Activated T-helper 2 cell treated with anti-CD3 and anti-CD28 coated beads, Interferon-gamma antibody, Interleukin-2, Interleukin-4, amounts not matched to agents 10 μg/mL and 5 μg/mL and 100 μg/mL, durations not matched to agents 14 hours and 24 hours and 36 hours (primary cell): ENCODE measurements at regions of chr16 and their contacts with region 1.

Region 1: GRCh38 chr16:3129137-3130131 is 5.4 kb upstream of the ZNF213 start:
- DNase-seq: peak; percentile 81
- H3K4me3 Mint-ChIP-seq: peak overlapping the region; percentile 87
- H3K27ac Mint-ChIP-seq: peak overlapping the region; percentile 80
- H3K4me1 Mint-ChIP-seq: peaks cover 46% of the 10 kb centered on the region
- H3K27me3 Mint-ChIP-seq: no peaks in the 10 kb centered on the region

Region 2: DNA sequence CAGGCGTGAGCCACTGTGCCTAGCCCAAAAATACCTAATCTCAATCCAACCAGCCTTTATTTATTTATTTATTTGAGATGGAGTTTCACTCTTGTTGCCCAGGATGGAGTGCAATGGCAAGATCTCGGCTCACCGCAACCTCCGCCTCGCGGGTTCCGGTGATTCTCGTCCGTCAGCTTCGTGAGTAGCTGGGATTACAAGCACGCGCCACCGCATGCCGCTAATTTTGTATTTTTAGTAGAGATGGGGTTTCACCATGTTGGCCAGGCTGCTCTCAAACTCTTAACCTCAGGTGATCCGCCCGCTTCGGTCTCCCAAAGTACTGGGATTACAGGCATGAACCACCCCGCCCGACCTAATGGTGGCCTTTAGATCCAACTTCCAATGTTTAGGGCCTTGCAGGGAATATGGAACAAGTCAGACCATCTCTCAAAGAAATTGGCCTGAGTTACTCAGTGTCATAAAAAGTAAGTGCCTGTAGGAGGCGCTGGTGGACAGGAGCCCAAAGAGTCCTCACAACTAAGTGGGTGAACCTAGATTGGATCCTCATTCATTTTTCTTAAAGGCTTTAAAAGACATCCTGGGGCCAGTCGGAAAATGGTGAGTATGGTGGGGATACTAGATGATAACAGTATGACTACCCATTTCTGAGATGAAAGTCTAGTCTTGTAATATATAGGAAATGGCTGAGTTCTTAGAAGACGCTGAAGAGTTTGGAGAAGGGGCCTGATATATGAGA is 35.0 kb before region 1 on chr16:
- intact Hi-C with region 1: loop called (anchors 1 kb)
- DNase-seq: peak; percentile 41
- H3K4me3 Mint-ChIP-seq: no peak overlapping the region
- H3K27ac Mint-ChIP-seq: peak overlapping the region; percentile 9
- H3K4me1 Mint-ChIP-seq: peaks cover 24% of the 10 kb centered on the region
- H3K27me3 Mint-ChIP-seq: peaks cover 4% of the 10 kb centered on the region

Region 3: GRCh38 chr16:3106205-3106928 is 23.1 kb before region 1 on chr16:
- intact Hi-C with region 1: loop called (anchors 1 kb)
- DNase-seq: peak; percentile 87
- H3K4me3 Mint-ChIP-seq: peak overlapping the region; percentile 84
- H3K27ac Mint-ChIP-seq: peak overlapping the region; percentile 93
- H3K4me1 Mint-ChIP-seq: peaks cover 17% of the 10 kb centered on the region
- H3K27me3 Mint-ChIP-seq: peaks cover 2% of the 10 kb centered on the region

Region 4: DNA sequence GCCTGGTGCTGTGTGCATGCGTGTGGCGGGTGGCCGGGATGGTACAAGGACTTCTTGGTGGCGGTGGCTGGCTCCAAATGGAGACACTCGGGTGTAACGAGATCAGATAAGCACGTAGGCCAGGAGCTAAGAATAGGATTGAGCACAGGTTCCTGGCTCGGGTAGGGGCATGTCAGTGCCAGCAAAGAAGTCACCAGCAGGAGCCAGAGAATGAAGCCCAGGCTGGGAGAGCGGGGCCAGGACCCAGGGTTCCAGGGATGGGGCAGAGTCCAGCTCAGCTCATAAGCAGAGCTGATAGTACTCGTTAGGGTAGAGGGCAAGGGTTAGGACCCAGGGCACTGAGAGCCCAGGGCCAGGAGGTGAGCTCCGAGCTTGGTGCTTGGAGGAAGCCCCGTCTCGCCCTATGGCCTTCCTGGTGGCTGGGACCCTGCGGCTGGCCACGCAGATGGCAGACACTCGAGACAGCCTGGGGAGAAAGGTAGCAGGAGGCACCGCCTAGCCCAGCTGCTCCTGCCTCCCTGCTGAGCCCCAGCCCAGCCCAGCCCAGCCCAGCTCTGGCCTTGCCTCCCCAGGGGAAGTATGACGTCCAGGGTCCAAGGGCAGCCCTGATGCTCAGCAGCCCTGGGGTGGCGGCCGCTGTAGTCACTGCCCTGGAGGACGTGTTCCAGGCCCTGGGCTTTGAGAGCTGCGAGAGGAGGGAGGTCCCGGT is 14.3 kb after region 1 on chr16:
- intact Hi-C with region 1: no loop called
- DNase-seq: no peak
- H3K4me3 Mint-ChIP-seq: no peak overlapping the region
- H3K27ac Mint-ChIP-seq: no peak overlapping the region
- H3K4me1 Mint-ChIP-seq: no peaks in the 10 kb centered on the region
- H3K27me3 Mint-ChIP-seq: peaks cover 3% of the 10 kb centered on the region